Mucosa of descending colon (tissue), 3 donors: ENCODE measurements at regions of chr2 and their contacts with region 1.

Region 1: GRCh38 chr2:176140513-176141317 is 10.6 kb upstream of the HOXD4 start:
- DNase-seq: peak in 2 of 3 donors; percentile 76 to 87
- ATAC-seq: peak; percentile 83
- H3K4me3 ChIP-seq: peak overlapping the region; percentile 10
- H3K4me1 ChIP-seq: peaks cover 7% of the 10 kb centered on the region
- CTCF ChIP-seq: peak; percentile 83

Region 2: DNA sequence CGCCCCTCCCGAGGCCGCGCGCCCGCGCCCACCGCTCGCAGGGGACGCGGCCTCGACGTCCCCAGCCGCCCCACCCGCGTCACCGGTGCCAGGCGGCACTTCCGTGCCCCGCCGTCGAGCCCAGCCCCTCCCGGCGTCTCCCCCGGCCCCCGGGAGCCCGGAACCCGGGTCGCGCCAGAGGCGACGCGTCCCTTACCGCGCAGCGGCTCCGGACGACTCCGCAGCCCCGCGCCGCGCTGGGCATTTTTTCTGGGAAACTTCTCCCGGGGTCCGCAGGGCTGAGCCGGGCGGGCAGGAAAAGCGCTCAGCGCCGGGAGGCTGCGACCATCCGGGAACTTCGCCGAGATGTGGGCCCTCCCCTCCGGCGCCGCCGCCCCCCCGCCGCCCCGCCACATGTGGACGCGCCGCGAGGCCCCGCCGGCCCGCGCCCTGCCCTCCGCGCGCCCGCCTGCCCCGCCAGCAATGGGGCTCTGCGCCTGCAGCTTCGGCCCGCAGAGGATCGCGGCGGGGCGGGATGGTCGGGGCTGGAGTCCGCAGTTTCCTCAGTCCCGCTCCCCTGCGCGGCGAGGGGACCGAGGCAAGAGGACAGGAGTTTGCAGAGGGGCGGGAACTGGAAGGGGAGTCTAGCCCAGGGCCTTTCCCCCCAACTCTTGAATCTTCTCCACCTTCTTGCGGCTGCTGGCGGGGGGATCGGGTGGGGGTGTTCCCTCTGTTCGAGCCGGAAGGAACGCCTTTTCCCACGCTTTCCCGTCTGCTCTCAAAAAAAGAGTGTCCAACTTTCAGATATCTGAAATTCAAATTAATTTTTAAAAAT is 1457.9 kb before region 1 on chr2:
- intact Hi-C with region 1: no loop called
- DNase-seq: peak; percentile 54 to 76 (median 73)
- ATAC-seq: peak; percentile 79
- H3K4me3 ChIP-seq: peak overlapping the region; percentile 63
- H3K4me1 ChIP-seq: peaks cover 16% of the 10 kb centered on the region
- CTCF ChIP-seq: no peak

Region 3: GRCh38 chr2:176280867-176281658 is 140.3 kb after region 1 on chr2:
- intact Hi-C with region 1: loop called in 1 of 2 experiments (anchors 10 kb)
- DNase-seq: no peak
- ATAC-seq: no peak
- H3K4me3 ChIP-seq: no peak overlapping the region
- H3K4me1 ChIP-seq: no peaks in the 10 kb centered on the region
- CTCF ChIP-seq: no peak

Region 4: GRCh38 chr2:176454893-176455811 is 314.4 kb after region 1 on chr2:
- intact Hi-C with region 1: loop called (anchors 2 to 5 kb)
- DNase-seq: peak; percentile 70 to 98 (median 88)
- ATAC-seq: peak; percentile 90
- H3K4me3 ChIP-seq: no peak overlapping the region
- H3K4me1 ChIP-seq: no peaks in the 10 kb centered on the region
- CTCF ChIP-seq: peak; percentile 80

Region 5: GRCh38 chr2:176554101-176555048 is 413.7 kb after region 1 on chr2:
- intact Hi-C with region 1: loop called (anchors 10 kb)
- DNase-seq: peak in 1 of 3 donors; percentile 33
- ATAC-seq: peak; percentile 80
- H3K4me3 ChIP-seq: no peak overlapping the region
- H3K4me1 ChIP-seq: no peaks in the 10 kb centered on the region
- CTCF ChIP-seq: peak; percentile 54

Region 6: GRCh38 chr2:176638167-176639015 is 497.7 kb after region 1 on chr2:
- intact Hi-C with region 1: loop called in 1 of 2 experiments (anchors 5 kb)
- DNase-seq: peak; percentile 71 to 83 (median 81)
- ATAC-seq: peak; percentile 94
- H3K4me3 ChIP-seq: peak overlapping the region; percentile 27
- H3K4me1 ChIP-seq: no peaks in the 10 kb centered on the region
- CTCF ChIP-seq: peak; percentile 51

Region 7: GRCh38 chr2:176821345-176821744 is 680.6 kb after region 1 on chr2:
- intact Hi-C with region 1: loop called in 1 of 2 experiments (anchors 10 kb)
- DNase-seq: no peak
- ATAC-seq: no peak
- H3K4me3 ChIP-seq: no peak overlapping the region
- H3K4me1 ChIP-seq: no peaks in the 10 kb centered on the region
- CTCF ChIP-seq: no peak

Region 8: GRCh38 chr2:177489719-177490301 is 1349.1 kb after region 1 on chr2:
- intact Hi-C with region 1: no loop called
- DNase-seq: peak in 1 of 3 donors; percentile 31
- ATAC-seq: no peak
- H3K4me3 ChIP-seq: no peak overlapping the region
- H3K4me1 ChIP-seq: no peaks in the 10 kb centered on the region
- CTCF ChIP-seq: no peak